ENCODE measurements at regions of chr10 and their contacts with region 1.

Region 1: GRCh38 chr10:73810735-73811465 is 498 bp downstream of the NDST2 start:
- DNase-seq: peak; percentile 21 to 81 (median 56)
- ATAC-seq: peak; percentile 29 to 45
- H3K4me3 Mint-ChIP-seq: peak overlapping the region; percentile 84 to 93 (median 89)
- H3K27ac Mint-ChIP-seq: peak overlapping the region; percentile 82 to 97 (median 95)
- H3K4me1 Mint-ChIP-seq: peaks cover 24 to 55% (median 46%) of the 10 kb centered on the region in 4 donors
- H3K27me3 Mint-ChIP-seq: no peaks in the 10 kb centered on the region

Region 2: GRCh38 chr10:73644015-73644743 is 166.7 kb before region 1 on chr10:
- POLR2A ChIA-PET with region 1: no interaction called
- DNase-seq: peak in 9 of 10 donors; percentile 19 to 71 (median 53)
- ATAC-seq: peak; percentile 72 to 73
- H3K4me3 Mint-ChIP-seq: peak overlapping the region in 4 of 10 donors; percentile 0 to 53 (median 14)
- H3K27ac Mint-ChIP-seq: peak overlapping the region in 1 of 10 donors; percentile 14
- H3K4me1 Mint-ChIP-seq: peaks cover 4 to 13% (median 6%) of the 10 kb centered on the region in 4 donors
- H3K27me3 Mint-ChIP-seq: peaks cover 0 to 12% (median 4%) of the 10 kb centered on the region in 5 donors

Region 3: DNA sequence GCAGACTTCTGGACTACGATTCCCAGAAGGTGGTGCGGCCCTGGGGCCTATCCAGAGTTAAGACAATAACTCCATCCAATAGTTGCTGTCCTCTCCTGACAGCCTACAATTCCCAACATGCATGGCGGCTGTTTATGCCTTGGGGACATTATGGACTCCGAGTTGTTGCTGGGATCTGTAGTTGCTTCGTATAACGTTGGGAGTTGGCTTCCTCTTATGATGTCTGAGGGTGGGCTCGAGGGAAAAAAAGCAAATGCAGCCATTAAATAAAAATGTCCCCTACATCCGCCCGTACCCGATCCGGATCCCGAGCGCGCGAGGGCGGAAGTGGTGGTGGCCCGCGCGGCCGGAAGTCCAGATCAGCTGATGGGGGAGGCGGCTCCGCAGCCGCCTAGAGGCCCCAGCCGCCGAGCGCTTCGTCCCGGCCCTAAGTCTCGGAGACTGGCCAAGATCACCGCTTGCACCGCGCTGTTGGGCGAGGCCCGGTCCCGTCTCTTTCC is 25.6 kb before region 1 on chr10 and contains the start of gene ZSWIM8:
- POLR2A ChIA-PET with region 1: interaction called, 70 read pairs
- DNase-seq: peak; percentile 76 to 92 (median 86)
- ATAC-seq: peak; percentile 81 to 83
- H3K4me3 Mint-ChIP-seq: peak within 1 kb of the TSS; percentile 89 to 100 (median 98)
- H3K27ac Mint-ChIP-seq: peak within 1 kb of the TSS; percentile 97 to 99 (median 98)
- H3K4me1 Mint-ChIP-seq: peaks cover 28 to 67% (median 56%) of the 10 kb centered on the region in 4 donors
- H3K27me3 Mint-ChIP-seq: no peaks in the 10 kb centered on the region
- polyA plus RNA-seq, gene ZSWIM8: 12.3 to 18.5 (median 13.4) TPM

Region 4: DNA sequence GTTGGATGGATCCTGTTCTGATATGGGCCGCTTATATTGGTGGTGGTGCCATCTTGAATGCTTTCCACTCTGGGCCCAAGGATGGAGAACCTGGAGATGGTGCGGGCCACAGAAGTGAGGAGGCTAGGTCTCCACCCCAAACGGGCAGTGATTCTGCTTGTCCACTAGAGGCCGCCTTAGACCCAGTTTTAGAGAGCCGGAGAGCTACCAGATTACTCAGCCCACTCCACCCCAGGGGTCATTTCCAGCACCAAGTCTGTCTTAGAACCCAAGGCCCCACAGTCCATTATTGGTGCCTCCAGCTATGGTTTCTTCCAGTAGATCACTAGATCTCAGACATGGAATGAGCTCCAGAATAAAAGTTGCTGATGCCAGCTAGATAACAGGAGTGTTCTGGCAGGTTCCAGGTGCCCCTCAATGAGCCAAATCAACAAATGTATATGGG is 75.2 kb after region 1 on chr10:
- POLR2A ChIA-PET with region 1: no interaction called
- DNase-seq: peak; percentile 41 to 83 (median 65)
- ATAC-seq: peak; percentile 94 to 100
- H3K4me3 Mint-ChIP-seq: no peak overlapping the region
- H3K27ac Mint-ChIP-seq: peak overlapping the region in 1 of 10 donors; percentile 9
- H3K4me1 Mint-ChIP-seq: peaks cover 0 to 12% (median 5%) of the 10 kb centered on the region in 4 donors
- H3K27me3 Mint-ChIP-seq: peaks cover 0 to 6% (median 0%) of the 10 kb centered on the region in 5 donors